ENCODE measurements at regions of chr13 and their contacts with region 1.

Region 1: DNA sequence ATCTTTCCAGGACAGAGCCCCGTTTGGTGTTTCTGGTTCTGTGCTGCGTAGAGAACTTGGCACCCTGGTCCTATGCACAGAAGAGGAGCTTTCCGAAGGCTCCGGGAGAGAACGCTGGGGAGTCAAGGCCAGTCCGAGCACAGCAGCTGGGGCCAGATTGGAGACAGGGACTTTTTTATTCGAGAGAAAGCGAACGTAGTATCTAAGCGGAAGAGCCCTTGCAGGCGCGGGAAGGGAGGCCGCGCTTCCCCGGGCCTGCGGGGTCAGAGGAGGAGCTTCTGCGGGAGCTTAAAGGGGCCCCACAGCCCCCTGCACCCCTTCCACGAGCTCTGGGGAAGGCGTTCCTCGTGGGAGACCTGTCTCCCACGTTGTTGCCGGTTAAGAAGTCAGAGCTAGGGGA is 48.6 kb upstream of the ARHGEF7 start:
- DNase-seq: no peak
- CTCF ChIP-seq: no peak

Region 2: DNA sequence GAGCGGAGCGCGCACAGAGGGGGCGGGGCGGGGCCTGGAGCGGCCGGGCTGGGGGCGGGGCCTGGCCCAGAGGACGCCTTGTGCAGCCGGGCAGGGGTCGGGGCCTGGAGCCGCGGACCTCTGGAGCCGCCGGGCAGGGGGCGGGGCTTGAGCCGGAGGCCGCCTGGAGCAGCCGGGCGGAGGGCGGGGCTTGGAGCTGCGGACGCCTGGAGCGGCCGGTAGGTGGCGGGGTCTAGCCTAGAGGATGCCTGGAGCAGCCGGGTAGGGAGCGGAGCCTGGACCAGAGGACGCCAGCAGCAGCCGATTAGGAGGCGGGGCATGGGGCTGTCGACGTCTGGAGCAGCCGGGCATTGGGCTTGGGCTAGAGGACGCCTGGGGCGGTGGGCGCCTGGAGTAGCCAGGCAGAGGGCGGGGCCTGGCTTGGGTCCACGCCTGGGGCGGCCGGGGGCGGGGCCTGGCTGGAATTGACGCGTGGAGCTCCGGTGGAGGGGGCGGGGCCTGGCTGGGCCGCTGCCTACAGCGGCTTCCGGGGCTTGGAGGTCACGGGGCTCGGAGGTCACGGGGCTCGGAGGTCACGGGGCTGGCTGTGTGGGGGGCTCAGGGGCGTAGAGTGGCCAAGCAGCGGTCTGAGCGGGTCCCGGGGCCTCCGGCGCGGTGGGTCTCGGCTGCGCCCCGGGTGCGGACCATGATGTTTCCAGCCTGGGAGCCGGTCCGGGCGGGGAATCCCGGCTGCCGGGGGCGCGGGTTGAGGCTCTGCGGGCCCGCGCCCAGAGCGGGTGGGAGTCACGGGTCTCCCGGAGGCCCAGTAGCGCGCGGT is 151.3 kb before region 1 on chr13 and contains the start of gene ANKRD10:
- CTCF ChIA-PET with region 1: interaction called, 16 read pairs
- POLR2A ChIA-PET with region 1: no interaction called
- DNase-seq: peak; percentile 99
- CTCF ChIP-seq: peak; percentile 83

Region 3: DNA sequence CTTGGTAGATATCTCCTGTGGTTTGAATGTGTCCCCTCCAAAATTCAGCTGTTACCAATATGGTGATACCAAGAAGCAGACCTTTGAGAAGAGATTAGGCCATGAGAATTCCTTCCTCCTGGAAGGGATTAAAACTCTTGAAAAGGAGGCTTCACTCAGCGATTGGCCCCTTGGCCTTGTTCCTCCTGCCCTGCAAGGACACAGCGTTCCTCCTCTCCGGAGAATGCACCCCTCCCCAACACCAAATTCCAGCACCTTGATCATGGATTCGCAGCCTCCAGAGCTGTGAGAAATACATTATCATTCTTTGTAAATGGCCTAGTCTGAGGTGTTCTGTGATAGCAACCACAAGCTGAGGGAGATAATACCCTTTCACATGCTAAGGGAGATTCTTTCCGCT is 14.1 kb after region 1 on chr13:
- CTCF ChIA-PET with region 1: interaction called, 35 read pairs
- POLR2A ChIA-PET with region 1: no interaction called
- DNase-seq: no peak
- CTCF ChIP-seq: no peak

Region 4: DNA sequence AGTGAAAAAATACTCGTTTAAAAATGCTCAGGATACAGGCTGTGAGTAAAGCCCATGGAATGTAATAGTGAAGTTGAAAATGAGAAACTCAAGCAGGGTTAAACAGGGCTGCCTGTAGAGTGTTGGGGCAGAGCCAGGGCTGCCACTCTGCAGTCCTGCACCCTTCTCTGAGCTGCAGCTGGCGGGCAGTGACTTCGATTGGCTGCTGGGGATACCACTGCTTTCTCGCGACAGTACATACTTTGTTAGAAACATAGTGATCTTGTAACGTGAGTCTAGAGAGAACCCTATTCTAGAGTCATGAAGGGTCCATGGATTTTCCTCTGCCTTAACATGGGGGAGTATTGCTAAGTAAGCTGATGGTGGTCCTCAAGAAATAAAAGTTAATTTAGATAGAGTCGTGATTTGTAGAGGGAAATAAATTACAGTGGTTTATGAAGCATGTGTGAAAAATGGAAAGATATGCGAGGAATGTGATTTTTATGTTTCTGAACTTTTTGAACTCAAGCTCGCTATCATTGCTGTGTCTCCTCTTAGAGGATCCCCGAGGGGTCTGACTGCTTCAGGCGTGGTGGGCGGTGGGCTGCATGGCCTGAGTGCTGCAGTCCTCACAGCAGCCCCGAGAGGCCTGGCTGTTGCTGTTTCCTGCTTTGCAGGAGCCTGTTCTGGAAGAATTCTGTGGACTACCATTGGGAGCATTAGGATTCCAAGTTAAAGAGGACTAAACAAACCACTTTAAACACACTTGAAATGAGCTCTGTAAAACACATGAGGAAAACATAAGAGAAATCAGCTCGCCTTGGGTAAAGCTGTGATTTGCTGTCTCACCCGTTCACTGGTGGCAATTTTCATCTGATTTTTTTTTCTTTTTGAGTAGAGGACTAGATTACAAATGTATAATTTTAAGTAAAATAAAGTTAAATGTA is 144.3 kb after region 1 on chr13:
- CTCF ChIA-PET with region 1: interaction called, 52 read pairs
- POLR2A ChIA-PET with region 1: no interaction called
- DNase-seq: no peak
- CTCF ChIP-seq: no peak

Region 5: DNA sequence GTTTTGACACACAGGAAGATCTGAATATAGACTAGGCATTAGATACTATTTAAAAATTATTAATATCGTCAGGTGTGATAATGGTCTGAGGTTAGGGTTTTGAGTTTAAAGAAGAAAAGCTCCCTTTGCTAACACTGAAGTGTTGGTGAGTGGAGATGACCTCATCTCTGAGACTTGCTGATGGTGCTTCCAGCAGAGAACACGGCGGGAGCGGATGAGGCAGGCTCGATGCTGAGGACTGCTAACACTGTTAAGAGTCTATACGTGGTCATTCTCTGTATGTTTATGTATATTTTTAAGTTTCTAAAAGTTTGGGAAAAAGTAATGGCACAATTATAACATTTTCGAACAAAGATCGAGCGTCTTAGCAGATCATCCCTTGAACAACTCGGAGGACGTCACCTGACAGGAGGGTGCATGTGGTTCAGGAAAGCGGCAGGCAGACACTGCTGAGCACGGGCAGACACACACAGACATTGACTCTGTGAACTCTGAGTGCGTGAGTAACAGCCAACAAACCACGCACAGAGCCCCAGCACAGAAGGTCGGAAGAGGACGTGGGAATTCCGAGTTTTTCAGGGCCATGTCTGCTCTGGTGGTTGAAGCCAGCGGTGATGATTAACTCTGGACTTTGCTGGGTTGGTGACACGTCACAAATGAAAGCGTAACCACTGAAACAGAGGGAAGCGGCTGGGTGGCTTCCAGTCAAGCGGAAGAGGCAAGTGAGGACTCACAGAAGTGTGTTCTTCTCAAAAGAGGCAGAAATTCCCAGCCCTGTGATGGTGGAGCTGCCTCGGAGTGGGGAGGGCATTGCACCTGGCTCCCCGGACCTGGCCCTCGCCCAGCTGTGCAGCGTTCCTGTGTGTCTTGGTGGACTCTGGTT is 162.0 kb after region 1 on chr13:
- CTCF ChIA-PET with region 1: interaction called, 50 read pairs
- POLR2A ChIA-PET with region 1: no interaction called
- DNase-seq: no peak
- CTCF ChIP-seq: no peak

Region 6: DNA sequence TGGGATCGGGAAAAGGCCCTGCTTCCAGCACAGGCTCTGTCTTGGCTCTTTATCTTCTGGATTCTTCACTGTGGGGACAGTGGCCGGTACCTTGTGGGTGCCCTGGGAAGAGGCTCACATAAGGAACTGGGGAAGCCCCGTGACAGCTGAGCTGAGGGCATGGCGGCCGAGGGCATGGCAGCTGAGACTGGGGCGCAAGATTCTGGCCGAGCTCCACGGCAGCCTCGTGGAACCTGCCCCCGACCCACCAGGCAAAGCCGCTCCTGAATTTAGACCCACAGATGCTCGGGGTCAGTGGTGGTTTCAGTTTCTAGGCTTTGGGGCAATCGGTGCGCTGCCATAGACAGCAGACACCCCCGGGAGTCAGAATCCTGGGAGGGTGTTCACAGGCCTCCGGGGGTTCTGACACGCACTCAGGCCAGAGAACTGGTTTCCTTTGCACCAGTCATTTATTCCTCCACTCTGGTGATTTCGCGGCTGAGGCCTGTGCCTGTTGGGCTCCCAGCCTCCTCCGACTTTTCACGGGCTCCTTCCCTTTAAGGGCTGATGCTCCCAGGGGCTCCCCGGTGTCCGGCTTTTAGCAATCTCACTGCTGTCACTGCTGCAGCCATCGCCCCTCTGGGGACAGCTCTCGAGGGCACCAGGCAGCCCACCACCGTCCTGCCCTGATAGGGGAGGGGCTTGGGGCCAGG is 371.5 kb after region 1 on chr13:
- CTCF ChIA-PET with region 1: interaction called, 14 read pairs
- POLR2A ChIA-PET with region 1: no interaction called
- DNase-seq: no peak
- CTCF ChIP-seq: no peak

Measured in GM10248 (cell line).